T-cell (primary cell): ENCODE measurements at regions of chr11 and their contacts with region 1.

Region 1: DNA sequence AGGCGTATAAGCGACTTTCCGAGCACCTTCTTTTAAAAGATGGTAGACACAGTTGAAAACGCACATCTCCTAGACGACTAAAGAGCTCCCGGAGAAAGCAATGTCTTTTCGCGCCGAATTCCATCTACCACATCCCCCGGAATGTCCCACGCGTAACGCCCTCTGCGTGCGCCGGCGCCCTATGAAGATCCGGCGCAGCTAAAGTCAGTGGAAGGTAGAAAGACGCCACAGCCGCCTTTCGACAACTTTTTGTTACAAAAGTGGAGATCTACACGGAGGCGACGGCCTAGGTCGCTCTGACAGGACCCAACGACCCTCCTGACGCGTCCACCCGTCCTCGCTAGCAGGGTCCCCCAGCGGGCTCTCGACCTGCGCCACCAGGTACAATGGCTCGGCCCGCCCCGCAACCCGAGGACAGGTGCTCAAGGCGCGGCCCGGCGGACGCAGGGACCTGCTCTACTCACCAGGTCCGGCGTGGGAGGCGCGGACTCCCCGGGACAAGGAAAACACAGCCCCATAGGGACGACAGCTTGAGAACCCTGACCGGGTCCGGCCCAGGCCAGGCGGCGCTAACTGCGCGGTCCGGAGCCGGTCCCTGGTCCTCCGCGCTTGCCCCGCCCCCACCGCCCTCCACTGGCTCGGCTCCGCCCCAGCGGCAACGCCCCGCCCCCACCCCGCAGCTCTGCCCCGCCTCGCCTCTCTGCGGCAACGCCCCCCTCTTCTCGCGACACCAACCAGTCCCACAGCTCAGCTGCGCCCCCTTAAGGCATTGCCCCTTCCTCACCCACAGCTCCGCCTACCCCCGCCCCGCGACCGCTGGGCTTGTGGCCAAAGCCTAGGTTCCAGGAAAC is at the start of gene SVIP:
- DNase-seq: peak; percentile 76 to 96 (median 90)
- ATAC-seq: peak; percentile 87 to 95 (median 92)
- H3K4me3 ChIP-seq: peak within 1 kb of the TSS; percentile 87 to 92
- H3K4me3 Mint-ChIP-seq: peak within 1 kb of the TSS; percentile 90 to 92 (median 92)
- H3K27ac ChIP-seq: peak within 1 kb of the TSS; percentile 82
- H3K27ac Mint-ChIP-seq: peak within 1 kb of the TSS; percentile 84 to 93
- H3K4me1 ChIP-seq: peaks cover 3 to 11% of the 10 kb centered on the region in 2 experiments
- H3K4me1 Mint-ChIP-seq: peaks cover 16 to 25% (median 18%) of the 10 kb centered on the region in 3 donors
- H3K27me3 ChIP-seq: no peaks in the 10 kb centered on the region
- H3K27me3 Mint-ChIP-seq: no peaks in the 10 kb centered on the region
- total RNA-seq, gene SVIP: 40.9 to 53.4 (median 48.4) TPM

Region 2: DNA sequence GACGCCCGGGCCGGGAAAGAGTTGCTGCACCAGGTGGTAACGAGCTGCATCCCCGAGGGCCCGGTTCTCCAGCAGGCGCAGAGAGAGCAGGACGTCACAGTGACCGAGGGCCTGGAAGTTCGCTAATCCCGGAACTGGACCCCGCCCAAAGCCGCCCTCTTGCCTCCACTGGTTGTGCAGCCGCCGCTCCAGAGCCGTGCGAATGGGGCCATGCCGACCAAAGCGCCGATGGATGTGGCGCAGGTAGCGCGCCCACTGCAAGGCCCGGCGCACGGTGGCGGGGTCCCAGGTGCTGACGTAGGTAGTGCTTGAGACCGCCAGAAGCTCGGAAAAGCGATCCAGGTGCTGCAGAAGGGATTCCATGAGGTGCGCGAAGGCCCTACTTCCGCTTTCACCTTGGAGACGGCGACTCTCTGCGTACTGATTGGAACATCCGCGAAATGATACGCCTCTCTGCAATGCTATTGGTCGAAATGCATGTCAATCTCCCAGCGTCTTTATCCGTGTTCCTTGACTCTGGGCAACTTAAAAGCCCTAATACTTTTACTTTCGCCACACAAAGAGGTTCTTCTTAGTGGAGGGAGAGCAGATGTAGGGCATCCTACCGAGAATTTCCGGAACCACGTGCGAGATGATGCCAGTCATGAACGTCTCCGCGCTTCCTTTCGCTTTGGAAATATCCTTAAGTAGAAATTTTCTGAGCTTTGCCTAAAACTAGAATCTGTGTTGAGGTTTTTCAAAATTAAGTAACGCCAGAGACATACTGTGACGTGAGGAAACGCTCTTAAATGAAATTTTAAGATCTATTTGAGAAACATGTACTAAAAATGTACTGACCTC is 203.8 kb before region 1 on chr11 and contains the start of gene FANCF:
- CTCF ChIA-PET with region 1: interaction called in 1 of 2 experiments, 12 read pairs
- POLR2A ChIA-PET with region 1: interaction called, 5 to 8 read pairs
- DNase-seq: peak; percentile 81 to 100 (median 92)
- ATAC-seq: peak; percentile 94 to 95 (median 94)
- H3K4me3 ChIP-seq: peak within 1 kb of the TSS; percentile 89 to 98
- H3K4me3 Mint-ChIP-seq: peak within 1 kb of the TSS; percentile 95 to 100 (median 99)
- H3K27ac ChIP-seq: peak within 1 kb of the TSS; percentile 88
- H3K27ac Mint-ChIP-seq: peak within 1 kb of the TSS; percentile 99 to 100
- H3K4me1 ChIP-seq: peaks cover 12 to 22% of the 10 kb centered on the region in 2 experiments
- H3K4me1 Mint-ChIP-seq: peaks cover 46 to 49% (median 47%) of the 10 kb centered on the region in 3 donors
- H3K27me3 ChIP-seq: no peaks in the 10 kb centered on the region
- H3K27me3 Mint-ChIP-seq: no peaks in the 10 kb centered on the region
- total RNA-seq, gene FANCF: 8.5 to 23.5 (median 22.2) TPM

Region 3: DNA sequence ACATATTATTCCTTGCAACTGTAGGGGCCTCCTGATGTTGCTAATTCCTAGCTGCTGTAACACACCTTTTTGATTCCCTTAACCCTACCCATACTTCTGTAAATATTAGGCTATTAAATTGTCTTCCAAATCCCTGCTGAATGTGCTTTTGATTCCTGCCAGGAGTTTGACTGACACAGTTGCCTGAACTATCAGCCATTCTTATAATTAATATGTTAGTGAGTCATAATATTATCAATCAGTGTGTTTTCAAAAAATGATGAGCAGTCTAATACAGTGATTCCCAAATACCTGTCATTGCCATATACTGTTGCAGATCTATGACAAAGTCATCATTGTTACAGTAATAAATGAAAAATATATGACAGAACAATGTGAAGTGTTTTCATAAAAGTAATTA is 187.9 kb before region 1 on chr11:
- CTCF ChIA-PET with region 1: no interaction called
- POLR2A ChIA-PET with region 1: no interaction called
- DNase-seq: no peak
- ATAC-seq: no peak
- H3K4me3 ChIP-seq: no peak overlapping the region
- H3K4me3 Mint-ChIP-seq: no peak overlapping the region
- H3K27ac ChIP-seq: no peak overlapping the region
- H3K27ac Mint-ChIP-seq: no peak overlapping the region
- H3K4me1 ChIP-seq: no peaks in the 10 kb centered on the region
- H3K4me1 Mint-ChIP-seq: peaks cover 0 to 1% (median 0%) of the 10 kb centered on the region in 3 donors
- H3K27me3 ChIP-seq: no peaks in the 10 kb centered on the region
- H3K27me3 Mint-ChIP-seq: no peaks in the 10 kb centered on the region

Region 4: GRCh38 chr11:22875869-22876473 is 46.5 kb after region 1 on chr11:
- CTCF ChIA-PET with region 1: interaction called, 3 to 11 read pairs
- POLR2A ChIA-PET with region 1: interaction called, 3 to 4 read pairs
- DNase-seq: peak in 33 of 35 experiments; percentile 5 to 80 (median 38)
- ATAC-seq: peak; percentile 45 to 86 (median 70)
- H3K4me3 ChIP-seq: no peak overlapping the region
- H3K4me3 Mint-ChIP-seq: no peak overlapping the region
- H3K27ac ChIP-seq: no peak overlapping the region
- H3K27ac Mint-ChIP-seq: no peak overlapping the region
- H3K4me1 ChIP-seq: no peaks in the 10 kb centered on the region
- H3K4me1 Mint-ChIP-seq: no peaks in the 10 kb centered on the region
- H3K27me3 ChIP-seq: no peaks in the 10 kb centered on the region
- H3K27me3 Mint-ChIP-seq: no peaks in the 10 kb centered on the region